BJ (cell line): ENCODE measurements at regions of chr1 and their contacts with region 1.

Region 1: DNA sequence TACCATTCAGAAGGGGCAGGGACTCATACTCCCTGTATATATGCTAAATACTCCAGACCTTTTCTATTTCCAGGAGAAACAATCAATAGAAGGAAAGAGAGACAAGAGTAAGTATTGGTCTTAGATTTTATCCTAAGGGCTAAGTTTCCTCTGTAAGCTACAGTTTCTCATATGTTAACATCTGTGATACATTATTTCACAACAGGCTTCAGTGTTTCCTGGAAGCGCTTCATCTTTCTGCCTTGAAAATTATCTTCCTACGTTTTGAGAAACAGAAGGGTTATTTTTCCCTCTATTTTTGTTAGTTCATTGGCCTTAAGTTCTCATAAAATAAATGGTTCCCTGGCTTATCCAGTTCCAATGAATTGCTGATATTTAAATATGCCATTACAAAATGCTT is 15.6 kb downstream of the FMO1 start:
- DNase-seq: no peak
- H3K4me3 ChIP-seq: no peak overlapping the region
- H3K27me3 ChIP-seq: no peaks in the 10 kb centered on the region
- CTCF ChIP-seq: no peak

Region 2: GRCh38 chr1:171233190-171233589 is 30.7 kb before region 1 on chr1:
- CTCF ChIA-PET with region 1: no interaction called
- POLR2A ChIA-PET with region 1: interaction called, 10 read pairs
- DNase-seq: no peak
- H3K4me3 ChIP-seq: no peak overlapping the region
- H3K27me3 ChIP-seq: no peaks in the 10 kb centered on the region
- CTCF ChIP-seq: no peak